SK-N-SH (cell line): ENCODE measurements at regions of chr17 and their contacts with region 1.

Region 1: GRCh38 chr17:29292992-29293889 is 707 bp downstream of the NUFIP2 start:
- DNase-seq: peak; percentile 67
- H3K4me3 ChIP-seq: peak overlapping the region; percentile 87 to 99
- H3K27ac ChIP-seq: peak overlapping the region; percentile 94 to 95
- H3K4me1 ChIP-seq: peaks cover 15 to 22% of the 10 kb centered on the region in 2 experiments; a peak in 3 of 4 replicates
- H3K27me3 ChIP-seq: no peaks in the 10 kb centered on the region
- CTCF ChIP-seq: no peak
- EP300 ChIP-seq: peak in 1 of 2 experiments; percentile 19; a peak in 1 of 4 replicates
- RAD21 ChIP-seq: no peak

Region 2: DNA sequence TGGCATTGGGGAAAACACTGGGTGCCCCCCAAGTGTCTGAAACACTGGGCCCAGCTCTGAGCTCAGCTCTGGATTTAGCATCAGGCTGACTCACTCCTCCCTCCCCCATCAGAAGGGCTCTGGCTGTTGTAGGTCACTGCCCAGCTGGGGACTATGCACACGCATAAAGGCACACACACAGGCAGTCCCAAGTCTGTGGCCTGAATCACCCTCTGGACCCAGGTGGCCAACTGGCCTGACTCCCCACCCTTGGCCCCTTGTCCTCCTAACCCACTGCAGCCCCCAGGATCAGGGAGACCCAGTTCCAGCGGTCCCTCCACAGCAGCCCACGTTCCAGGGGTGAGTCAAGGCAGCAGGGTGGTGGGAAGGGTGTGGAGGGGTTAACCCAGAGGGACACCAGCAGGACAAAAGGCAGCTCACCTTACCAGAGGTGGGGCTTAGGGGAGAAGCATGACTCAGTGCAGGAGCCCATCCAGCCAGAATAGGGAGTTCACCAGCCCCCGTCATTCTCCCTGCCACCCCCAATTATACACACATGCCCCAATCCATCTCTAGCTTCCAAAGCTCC is 160.0 kb before region 1 on chr17:
- CTCF ChIA-PET with region 1: interaction called, 10 read pairs
- POLR2A ChIA-PET with region 1: no interaction called
- DNase-seq: no peak
- H3K4me3 ChIP-seq: no peak overlapping the region
- H3K27ac ChIP-seq: peak overlapping the region; percentile 50 to 62; a peak in 2 of 4 replicates
- H3K4me1 ChIP-seq: peaks cover 20 to 27% of the 10 kb centered on the region in 2 experiments
- H3K27me3 ChIP-seq: no peaks in the 10 kb centered on the region
- CTCF ChIP-seq: no peak
- EP300 ChIP-seq: no peak
- RAD21 ChIP-seq: no peak

Region 3: DNA sequence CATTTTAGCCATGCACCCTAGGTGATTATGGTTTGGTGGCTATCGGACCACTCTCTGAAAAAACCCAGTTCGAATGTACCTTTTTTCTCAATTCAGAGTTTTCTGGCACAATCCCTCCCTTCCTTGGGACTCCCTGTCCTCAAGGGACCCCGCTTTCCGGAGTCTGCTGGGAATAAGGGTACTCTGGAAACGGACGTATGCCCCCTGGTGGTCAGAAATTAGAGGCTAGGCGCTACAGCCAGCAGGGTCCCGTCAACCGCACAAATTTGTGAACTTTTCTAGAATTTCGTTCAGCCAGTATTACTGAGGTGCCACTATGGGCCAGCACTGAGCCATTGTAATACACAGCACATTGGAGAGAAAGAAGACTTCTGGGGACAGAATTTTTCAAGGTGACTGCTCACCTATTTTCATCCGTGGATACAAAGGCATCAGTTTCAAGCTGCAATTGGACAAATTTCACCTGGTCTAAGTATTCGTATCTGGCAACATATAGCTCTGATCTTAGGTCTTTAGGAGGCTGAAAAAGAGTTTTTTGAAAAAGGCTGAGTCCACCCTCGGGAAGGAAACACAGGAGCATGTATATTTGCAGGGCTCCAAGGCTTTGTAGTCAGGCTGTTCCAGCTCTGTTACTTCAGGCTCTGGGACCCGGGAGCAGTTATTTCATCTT is 73.7 kb before region 1 on chr17:
- CTCF ChIA-PET with region 1: interaction called, 10 read pairs
- POLR2A ChIA-PET with region 1: no interaction called
- DNase-seq: peak; percentile 86
- H3K4me3 ChIP-seq: peak overlapping the region in 1 of 2 experiments; percentile 17; a peak in 1 of 4 replicates
- H3K27ac ChIP-seq: no peak overlapping the region
- H3K4me1 ChIP-seq: peaks cover 0 to 6% of the 10 kb centered on the region in 2 experiments; a peak in 1 of 4 replicates
- H3K27me3 ChIP-seq: no peaks in the 10 kb centered on the region
- CTCF ChIP-seq: peak; percentile 97
- EP300 ChIP-seq: no peak; a peak in 1 of 4 replicates
- RAD21 ChIP-seq: peak; percentile 75

Region 4: GRCh38 chr17:29241015-29241963 is 52.0 kb before region 1 on chr17:
- CTCF ChIA-PET with region 1: interaction called, 19 read pairs
- POLR2A ChIA-PET with region 1: no interaction called
- DNase-seq: peak; percentile 39
- H3K4me3 ChIP-seq: no peak overlapping the region
- H3K27ac ChIP-seq: peak overlapping the region; percentile 80 to 93
- H3K4me1 ChIP-seq: peaks cover 23 to 28% of the 10 kb centered on the region in 2 experiments
- H3K27me3 ChIP-seq: no peaks in the 10 kb centered on the region
- CTCF ChIP-seq: peak; percentile 26
- EP300 ChIP-seq: peak in 1 of 2 experiments; percentile 72; a peak in 2 of 4 replicates
- RAD21 ChIP-seq: peak; percentile 31

Region 5: GRCh38 chr17:29252101-29252866 is 41.0 kb before region 1 on chr17:
- CTCF ChIA-PET with region 1: interaction called, 19 read pairs
- POLR2A ChIA-PET with region 1: interaction called, 6 read pairs
- DNase-seq: peak; percentile 32
- H3K4me3 ChIP-seq: no peak overlapping the region
- H3K27ac ChIP-seq: no peak overlapping the region
- H3K4me1 ChIP-seq: peaks cover 0 to 29% of the 10 kb centered on the region in 2 experiments; a peak in 2 of 4 replicates
- H3K27me3 ChIP-seq: no peaks in the 10 kb centered on the region
- CTCF ChIP-seq: peak; percentile 67
- EP300 ChIP-seq: no peak
- RAD21 ChIP-seq: peak; percentile 25; the same call in 1 of the 2 replicates

Region 6: GRCh38 chr17:29357821-29358232 is 64.6 kb after region 1 on chr17:
- CTCF ChIA-PET with region 1: no interaction called
- POLR2A ChIA-PET with region 1: no interaction called
- DNase-seq: no peak
- H3K4me3 ChIP-seq: no peak overlapping the region
- H3K27ac ChIP-seq: no peak overlapping the region
- H3K4me1 ChIP-seq: peaks cover 0 to 11% of the 10 kb centered on the region in 2 experiments; a peak in 1 of 4 replicates
- H3K27me3 ChIP-seq: no peaks in the 10 kb centered on the region
- CTCF ChIP-seq: no peak
- EP300 ChIP-seq: no peak
- RAD21 ChIP-seq: no peak

Region 7: GRCh38 chr17:30041551-30041950 is 748.3 kb after region 1 on chr17:
- CTCF ChIA-PET with region 1: no interaction called
- POLR2A ChIA-PET with region 1: no interaction called
- DNase-seq: no peak
- H3K4me3 ChIP-seq: no peak overlapping the region
- H3K27ac ChIP-seq: no peak overlapping the region
- H3K4me1 ChIP-seq: no peaks in the 10 kb centered on the region
- H3K27me3 ChIP-seq: no peaks in the 10 kb centered on the region
- CTCF ChIP-seq: no peak
- EP300 ChIP-seq: no peak
- RAD21 ChIP-seq: no peak